ENCODE measurements at regions of chr12 and their contacts with region 1.

Region 1: DNA sequence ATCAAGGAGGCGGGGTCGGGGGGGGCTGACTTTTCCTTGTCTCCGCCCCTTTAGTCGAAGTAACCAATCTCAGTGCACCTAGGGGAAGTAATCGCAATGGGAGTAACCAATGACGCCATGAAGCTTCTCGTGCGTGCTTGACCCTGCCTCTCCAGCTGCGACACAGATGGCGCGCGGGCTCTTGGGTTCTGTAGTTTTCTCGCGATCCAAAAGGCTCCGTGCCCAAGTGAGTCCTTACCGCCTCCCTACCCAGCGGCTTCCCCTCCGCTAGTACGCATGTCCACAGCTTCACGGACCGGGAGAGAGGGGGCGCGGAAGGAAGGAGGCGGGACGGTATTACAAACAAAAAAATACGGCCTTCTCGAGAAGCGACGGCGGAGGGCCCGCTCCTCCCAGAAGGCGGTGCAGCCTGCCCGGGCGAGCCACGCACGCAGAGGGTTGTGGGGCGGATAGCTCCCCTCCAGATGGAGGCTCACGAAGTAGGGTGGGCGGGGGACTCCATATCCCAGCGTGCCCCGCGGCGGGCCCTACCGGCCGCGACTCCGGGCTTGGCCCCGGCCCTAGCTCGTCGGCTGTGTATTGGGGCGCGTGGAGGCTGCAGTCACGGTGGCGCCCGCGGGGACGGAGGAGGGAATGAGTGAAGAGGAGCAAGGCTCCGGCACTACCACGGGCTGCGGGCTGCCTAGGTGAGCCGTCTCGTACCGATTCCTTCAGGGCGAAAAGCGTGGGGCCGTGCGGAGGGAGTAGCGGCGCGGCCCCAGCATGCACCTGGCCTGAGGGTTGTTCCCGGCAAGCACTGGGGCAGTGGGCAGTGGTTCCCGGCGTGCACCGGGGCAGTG is at the start of gene TARBP2:
- DNase-seq: peak; percentile 97 to 98
- ATAC-seq: peak; percentile 93
- H3K4me3 ChIP-seq: peak within 1 kb of the TSS; percentile 31 to 68
- H3K27ac ChIP-seq: peak within 1 kb of the TSS; percentile 94 to 99
- H3K4me1 ChIP-seq: no peaks in the 10 kb centered on the region
- H3K27me3 ChIP-seq: no peaks in the 10 kb centered on the region
- total RNA-seq, gene TARBP2: 11.5 to 22.5 TPM

Region 2: GRCh38 chr12:53321074-53321814 is 179.8 kb before region 1 on chr12 and contains the start of gene AAAS:
- intact Hi-C with region 1: loop called (anchors 10 kb)
- DNase-seq: peak; percentile 98
- ATAC-seq: peak; percentile 94
- H3K4me3 ChIP-seq: peak within 1 kb of the TSS; percentile 54 to 61
- H3K27ac ChIP-seq: peak within 1 kb of the TSS in 1 of 2 donors; percentile 76
- H3K4me1 ChIP-seq: peaks cover 0 to 4% of the 10 kb centered on the region in 2 donors
- H3K27me3 ChIP-seq: no peaks in the 10 kb centered on the region
- total RNA-seq, gene AAAS: 33.3 to 45.3 TPM

Region 3: DNA sequence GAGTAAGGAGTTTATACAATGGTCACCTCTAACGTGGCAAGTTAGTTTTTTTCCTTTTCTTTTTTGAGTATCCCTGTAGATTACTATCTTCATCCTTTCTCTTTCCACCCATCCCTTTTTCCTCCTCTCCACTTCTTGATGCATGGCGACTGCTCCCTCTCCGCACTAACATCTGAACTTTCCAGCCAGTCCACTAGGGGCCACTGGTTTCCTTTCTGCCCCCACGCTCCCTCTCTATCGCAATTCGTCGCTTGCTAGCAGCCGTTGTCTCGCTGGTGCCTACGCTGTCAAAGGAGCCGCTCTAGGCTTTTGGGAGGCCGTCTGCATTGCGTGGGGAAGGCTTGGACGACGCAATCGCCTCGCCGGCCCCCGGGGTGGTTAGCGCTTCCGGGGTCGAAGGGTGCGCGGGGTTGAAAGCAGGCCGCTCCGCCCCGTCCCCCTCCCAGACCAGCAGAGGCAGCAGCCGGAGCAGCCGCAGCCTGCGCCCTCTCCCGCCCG is 49.3 kb before region 1 on chr12 and contains the start of gene PCBP2:
- intact Hi-C with region 1: loop called in 1 of 2 experiments (anchors 2 kb)
- DNase-seq: peak; percentile 99
- ATAC-seq: peak; percentile 98
- H3K4me3 ChIP-seq: peak within 1 kb of the TSS; percentile 56 to 88
- H3K27ac ChIP-seq: peak within 1 kb of the TSS; percentile 53 to 97
- H3K4me1 ChIP-seq: peaks cover 3 to 5% of the 10 kb centered on the region in 2 donors
- H3K27me3 ChIP-seq: no peaks in the 10 kb centered on the region
- total RNA-seq, gene PCBP2: 578 to 688 TPM

Region 4: DNA sequence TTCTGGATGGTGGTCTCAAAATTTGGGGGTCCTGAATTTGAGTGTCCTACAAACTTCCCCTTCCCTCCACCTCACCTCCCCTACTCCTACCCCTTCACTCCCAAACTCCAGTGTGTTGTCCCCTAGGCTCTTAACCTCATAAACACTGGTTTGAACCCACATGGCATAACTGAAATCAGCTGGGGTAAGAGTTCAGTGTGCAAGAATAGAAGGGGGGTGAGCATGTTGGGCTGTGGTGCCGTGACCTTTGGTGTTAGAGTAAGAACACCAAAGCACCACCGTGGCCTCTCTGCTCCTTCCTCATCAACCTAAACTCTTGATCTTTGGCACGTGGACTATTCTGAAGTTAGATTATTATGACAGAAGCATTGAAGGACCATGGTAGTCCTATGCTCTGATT is 38.1 kb before region 1 on chr12:
- intact Hi-C with region 1: no loop called
- DNase-seq: no peak
- ATAC-seq: no peak
- H3K4me3 ChIP-seq: no peak overlapping the region
- H3K27ac ChIP-seq: no peak overlapping the region
- H3K4me1 ChIP-seq: no peaks in the 10 kb centered on the region
- H3K27me3 ChIP-seq: no peaks in the 10 kb centered on the region

Region 5: GRCh38 chr12:53675651-53676453 is 174.9 kb after region 1 on chr12 and contains the start of gene ATP5MC2:
- intact Hi-C with region 1: no loop called
- DNase-seq: peak; percentile 98 to 99
- ATAC-seq: peak; percentile 98
- H3K4me3 ChIP-seq: peak within 1 kb of the TSS; percentile 43 to 58
- H3K27ac ChIP-seq: peak within 1 kb of the TSS; percentile 80 to 99
- H3K4me1 ChIP-seq: peaks cover 0 to 2% of the 10 kb centered on the region in 2 donors
- H3K27me3 ChIP-seq: no peaks in the 10 kb centered on the region
- total RNA-seq, gene ATP5MC2: 152 to 183 TPM

Measured in aorta (tissue), 5 donors.